ENCODE measurements at regions of chr9 and their contacts with region 1.

Region 1: GRCh38 chr9:97398999-97399758 is 12.7 kb upstream of the TDRD7 start:
- DNase-seq: peak; percentile 62 to 83 (median 73)
- H3K4me3 ChIP-seq: no peak overlapping the region
- H3K4me3 Mint-ChIP-seq: no peak overlapping the region
- H3K27ac ChIP-seq: no peak overlapping the region
- H3K27ac Mint-ChIP-seq: peak overlapping the region in 1 of 7 donors; percentile 57
- H3K4me1 ChIP-seq: no peaks in the 10 kb centered on the region
- H3K4me1 Mint-ChIP-seq: peaks cover 2% of the 10 kb centered on the region
- H3K27me3 ChIP-seq: no peaks in the 10 kb centered on the region
- H3K27me3 Mint-ChIP-seq: peaks cover 0 to 6% (median 5%) of the 10 kb centered on the region in 3 donors
- CTCF ChIP-seq: peak; percentile 98

Region 2: DNA sequence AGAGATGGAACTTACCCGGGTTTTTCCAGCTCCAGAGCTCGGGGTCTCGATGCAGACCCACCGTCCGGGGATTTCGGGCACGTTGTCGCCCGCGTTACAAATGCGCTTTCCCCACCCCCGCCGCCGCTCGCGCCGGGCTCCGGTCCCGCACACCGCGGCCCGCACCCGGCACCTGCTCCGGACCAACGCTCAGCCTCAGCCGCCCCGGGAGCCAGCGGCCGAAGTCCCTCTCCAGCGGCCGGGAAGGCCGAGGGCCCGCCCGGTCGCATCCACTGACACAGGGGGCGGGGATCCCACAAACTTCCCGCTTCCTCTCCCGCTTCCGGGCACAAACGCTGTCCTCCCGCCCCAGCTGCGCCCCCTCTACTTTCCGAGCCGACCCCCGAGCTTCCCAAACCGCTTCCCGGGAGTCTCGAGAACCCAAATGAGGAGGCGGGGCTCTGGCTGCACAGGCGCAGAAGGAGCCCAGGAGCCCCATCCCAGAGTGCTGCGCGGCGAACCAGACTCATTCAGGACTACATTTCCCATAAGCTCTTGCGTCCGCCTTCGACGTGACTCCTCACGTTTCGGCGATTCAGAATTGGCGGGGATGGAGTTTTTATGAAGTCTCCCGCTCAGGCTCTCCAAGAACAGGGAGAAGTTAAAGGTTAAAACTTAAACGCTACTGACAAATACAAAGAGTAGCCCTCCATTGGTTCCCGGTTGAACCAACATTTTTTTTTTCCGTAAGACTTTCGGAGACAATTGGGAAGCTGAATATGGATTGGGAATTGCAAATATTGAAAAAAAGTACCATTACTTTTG is 544.9 kb before region 1 on chr9 and contains the start of gene ZNF782:
- intact Hi-C with region 1: loop called (anchors 5 kb)
- DNase-seq: peak; percentile 80 to 89 (median 87)
- H3K4me3 ChIP-seq: peak within 1 kb of the TSS; percentile 85 to 97 (median 88)
- H3K4me3 Mint-ChIP-seq: peak within 1 kb of the TSS; percentile 100
- H3K27ac ChIP-seq: peak within 1 kb of the TSS in 1 of 2 donors; percentile 52
- H3K27ac Mint-ChIP-seq: peak within 1 kb of the TSS; percentile 86 to 98 (median 93)
- H3K4me1 ChIP-seq: peaks cover 17 to 20% of the 10 kb centered on the region in 2 donors
- H3K4me1 Mint-ChIP-seq: peaks cover 27% of the 10 kb centered on the region
- H3K27me3 ChIP-seq: peaks cover 3 to 6% of the 10 kb centered on the region in 2 donors
- H3K27me3 Mint-ChIP-seq: peaks cover 7 to 12% (median 10%) of the 10 kb centered on the region in 3 donors
- CTCF ChIP-seq: no peak
- polyA plus RNA-seq, gene ZNF782: 1.1 to 1.3 (median 1.1) TPM

Region 3: DNA sequence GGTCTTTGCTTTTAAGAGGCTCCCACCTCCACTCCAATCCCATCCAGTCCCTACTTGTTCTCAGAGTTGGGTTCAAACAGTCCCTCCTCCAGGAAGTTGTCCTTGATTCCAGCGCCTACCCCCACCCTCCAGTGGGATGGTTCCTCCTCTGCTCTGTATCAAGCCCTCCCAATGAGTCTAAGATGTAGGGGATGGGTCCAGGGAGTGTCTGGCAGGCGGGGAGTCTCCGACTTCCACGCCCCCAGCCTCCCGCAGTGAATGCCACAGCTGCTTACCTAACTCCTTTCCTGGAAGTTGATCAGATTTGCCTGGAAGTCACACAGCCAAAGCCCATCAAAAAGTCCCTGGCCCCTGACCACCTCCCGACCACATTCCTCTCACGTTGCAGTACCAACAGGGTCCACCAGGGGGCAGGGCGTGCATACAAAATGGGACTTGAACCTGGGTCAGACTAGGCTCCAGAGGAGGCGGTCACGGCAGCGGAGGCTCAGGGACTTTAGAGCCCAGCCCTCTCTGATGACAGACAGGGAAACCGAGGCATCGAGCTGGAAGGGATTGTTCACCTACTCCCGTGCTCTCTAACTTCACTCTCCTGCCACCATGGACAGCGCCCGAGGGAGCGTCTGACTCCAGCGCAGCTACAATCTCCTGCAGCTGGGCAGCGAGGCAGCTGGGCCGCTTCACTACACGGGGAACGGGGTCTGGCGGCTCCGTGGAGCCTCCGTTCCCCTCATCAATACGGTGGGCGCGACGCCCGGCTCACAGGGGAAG is 12.3 kb before region 1 on chr9:
- intact Hi-C with region 1: loop called in 1 of 2 experiments (anchors 2 kb)
- DNase-seq: peak; percentile 52 to 78 (median 56)
- H3K4me3 ChIP-seq: no peak overlapping the region
- H3K4me3 Mint-ChIP-seq: peak overlapping the region in 1 of 2 donors; percentile 31
- H3K27ac ChIP-seq: no peak overlapping the region
- H3K27ac Mint-ChIP-seq: peak overlapping the region in 2 of 7 donors; percentile 12 to 36
- H3K4me1 ChIP-seq: peaks cover 17 to 23% of the 10 kb centered on the region in 2 donors
- H3K4me1 Mint-ChIP-seq: peaks cover 19% of the 10 kb centered on the region
- H3K27me3 ChIP-seq: no peaks in the 10 kb centered on the region
- H3K27me3 Mint-ChIP-seq: peaks cover 3 to 15% (median 7%) of the 10 kb centered on the region in 3 donors
- CTCF ChIP-seq: peak; percentile 99